CD8-positive, alpha-beta memory T cell (primary cell): ENCODE measurements at regions of chr6 and their contacts with region 1.

Region 1: GRCh38 chr6:148746363-148747144 is at the start of gene UST:
- DNase-seq: peak; percentile 52 to 86 (median 61)
- H3K4me3 ChIP-seq: peak within 1 kb of the TSS; percentile 67
- H3K4me3 Mint-ChIP-seq: peak within 1 kb of the TSS; percentile 92 to 99 (median 98)
- H3K27ac ChIP-seq: peak within 1 kb of the TSS; percentile 51
- H3K27ac Mint-ChIP-seq: peak within 1 kb of the TSS; percentile 79 to 99 (median 94)
- H3K4me1 ChIP-seq: peaks cover 17% of the 10 kb centered on the region
- H3K4me1 Mint-ChIP-seq: peaks cover 32 to 47% (median 45%) of the 10 kb centered on the region in 3 donors
- H3K27me3 ChIP-seq: peaks cover 7% of the 10 kb centered on the region
- H3K27me3 Mint-ChIP-seq: peaks cover 0 to 3% of the 10 kb centered on the region in 2 donors
- total RNA-seq, gene UST: 6.4 to 7.8 TPM

Region 2: GRCh38 chr6:148559848-148560433 is 186.6 kb before region 1 on chr6:
- CTCF ChIA-PET with region 1: no interaction called
- POLR2A ChIA-PET with region 1: no interaction called
- DNase-seq: peak; percentile 51 to 78 (median 59)
- H3K4me3 ChIP-seq: peak overlapping the region; percentile 41
- H3K4me3 Mint-ChIP-seq: peak overlapping the region in 3 of 7 donors; percentile 16 to 45 (median 32)
- H3K27ac ChIP-seq: no peak overlapping the region
- H3K27ac Mint-ChIP-seq: no peak overlapping the region
- H3K4me1 ChIP-seq: peaks cover 13% of the 10 kb centered on the region
- H3K4me1 Mint-ChIP-seq: peaks cover 11 to 19% (median 14%) of the 10 kb centered on the region in 3 donors
- H3K27me3 ChIP-seq: no peaks in the 10 kb centered on the region
- H3K27me3 Mint-ChIP-seq: peaks cover 5 to 23% of the 10 kb centered on the region in 2 donors

Region 3: GRCh38 chr6:148653138-148653776 is 93.3 kb before region 1 on chr6:
- CTCF ChIA-PET with region 1: no interaction called
- POLR2A ChIA-PET with region 1: no interaction called
- DNase-seq: no peak
- H3K4me3 ChIP-seq: no peak overlapping the region
- H3K4me3 Mint-ChIP-seq: no peak overlapping the region
- H3K27ac ChIP-seq: no peak overlapping the region
- H3K27ac Mint-ChIP-seq: no peak overlapping the region
- H3K4me1 ChIP-seq: no peaks in the 10 kb centered on the region
- H3K4me1 Mint-ChIP-seq: no peaks in the 10 kb centered on the region
- H3K27me3 ChIP-seq: no peaks in the 10 kb centered on the region
- H3K27me3 Mint-ChIP-seq: peaks cover 5 to 48% of the 10 kb centered on the region in 2 donors

Region 4: DNA sequence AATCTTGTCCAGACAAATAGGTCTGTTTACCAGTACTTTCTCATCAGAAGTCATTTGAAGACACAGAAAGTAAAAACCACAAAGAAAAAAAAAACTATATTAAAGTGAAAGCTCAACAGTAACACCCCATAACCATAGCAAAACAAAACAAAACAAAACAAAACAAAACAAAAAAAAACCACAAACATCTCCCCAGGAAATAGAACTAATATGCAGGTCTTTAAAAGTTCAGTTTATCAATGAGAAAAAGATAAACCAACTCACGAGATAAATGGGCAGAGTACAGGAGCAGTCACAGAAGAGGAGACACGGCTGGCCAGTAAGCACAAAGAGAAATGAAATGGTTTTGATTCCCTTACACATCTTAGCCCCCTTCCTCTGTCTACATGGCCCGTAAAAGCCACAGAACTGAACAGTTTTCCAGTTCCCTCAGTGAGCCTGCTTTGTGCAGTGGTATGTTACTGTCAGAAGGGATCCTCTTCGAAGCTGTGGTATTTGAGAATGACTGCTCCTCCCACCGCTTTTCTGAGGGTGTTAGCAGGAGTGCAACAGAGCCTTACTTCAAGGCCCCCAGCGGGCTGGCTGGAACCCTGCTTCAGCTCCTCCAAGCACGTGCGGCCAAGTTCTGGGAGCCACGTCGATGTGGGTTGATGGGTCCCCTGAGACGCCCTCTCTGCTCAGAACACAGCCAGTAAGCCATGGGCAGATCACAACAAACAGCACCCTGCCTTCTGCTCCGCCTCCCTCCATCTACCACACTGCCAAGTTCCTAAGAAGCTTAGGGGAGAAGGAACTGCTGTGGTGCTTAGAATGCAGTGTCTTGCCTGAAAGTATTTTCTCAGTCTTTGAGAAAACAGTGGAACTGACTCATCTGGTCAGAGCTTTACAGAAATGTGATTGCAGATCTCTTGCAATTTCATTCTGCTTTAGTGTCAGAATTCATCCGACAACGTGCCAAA is 14.3 kb after region 1 on chr6:
- CTCF ChIA-PET with region 1: interaction called, 46 read pairs
- POLR2A ChIA-PET with region 1: interaction called, 39 read pairs
- DNase-seq: peak; percentile 35 to 77 (median 53)
- H3K4me3 ChIP-seq: peak overlapping the region; percentile 51
- H3K4me3 Mint-ChIP-seq: peak overlapping the region; percentile 67 to 93 (median 80)
- H3K27ac ChIP-seq: peak overlapping the region; percentile 91
- H3K27ac Mint-ChIP-seq: peak overlapping the region; percentile 90 to 98 (median 95)
- H3K4me1 ChIP-seq: peaks cover 34% of the 10 kb centered on the region
- H3K4me1 Mint-ChIP-seq: peaks cover 62 to 92% (median 84%) of the 10 kb centered on the region in 3 donors
- H3K27me3 ChIP-seq: no peaks in the 10 kb centered on the region
- H3K27me3 Mint-ChIP-seq: peaks cover 0 to 3% of the 10 kb centered on the region in 2 donors